Activated T-helper 2 cell treated with anti-CD3 and anti-CD28 coated beads, Interferon-gamma antibody, Interleukin-2, Interleukin-4, amounts not matched to agents 10 μg/mL and 5 μg/mL and 100 μg/mL, durations not matched to agents 14 hours and 24 hours and 36 hours (primary cell): ENCODE measurements at regions of chr2 and their contacts with region 1.

Region 1: GRCh38 chr2:108448678-108449493 is at the start of gene GCC2:
- DNase-seq: peak; percentile 94
- H3K4me3 Mint-ChIP-seq: peak within 1 kb of the TSS; percentile 93
- H3K27ac Mint-ChIP-seq: peak within 1 kb of the TSS; percentile 95
- H3K4me1 Mint-ChIP-seq: peaks cover 39% of the 10 kb centered on the region
- H3K27me3 Mint-ChIP-seq: no peaks in the 10 kb centered on the region
- total RNA-seq, gene GCC2: 38.8 and 42.7 TPM in 2 replicates

Region 2: DNA sequence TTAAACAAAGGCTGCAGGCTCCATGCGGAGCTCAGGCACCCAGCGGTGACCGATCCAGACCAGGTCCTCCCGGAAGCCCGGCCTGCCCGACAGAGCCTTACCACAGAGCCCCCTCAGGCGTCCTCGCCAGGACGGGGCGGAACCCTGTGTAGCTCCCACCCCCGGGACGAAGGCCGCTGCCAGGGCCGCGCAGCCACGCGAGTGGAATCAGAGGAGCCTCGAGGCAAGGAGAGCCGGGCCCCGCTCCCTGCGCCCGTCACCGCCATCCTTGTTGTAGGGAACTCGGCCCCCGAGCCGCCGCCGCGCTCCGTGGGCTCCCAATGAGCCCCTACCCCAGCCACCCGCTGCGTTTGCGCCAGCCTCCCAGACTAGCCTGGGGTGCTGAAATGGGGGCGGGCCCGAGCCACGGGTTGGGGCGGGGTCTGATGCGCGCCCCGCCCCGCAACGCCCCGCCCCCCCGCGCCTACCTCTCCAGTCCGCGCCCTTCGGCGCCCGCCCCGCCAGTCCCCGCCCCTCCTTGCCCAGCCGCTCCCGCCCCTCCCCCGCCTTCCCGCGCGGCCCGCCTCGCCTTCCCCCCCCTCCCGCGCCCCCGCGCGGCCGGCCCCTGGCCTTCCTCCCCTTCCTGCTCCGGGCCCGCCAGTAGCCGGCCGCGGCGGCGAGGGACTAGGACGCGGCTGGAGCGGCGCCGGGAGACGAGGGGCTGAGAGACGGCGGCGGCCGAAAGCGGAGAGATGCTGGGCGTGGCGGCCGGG is 85.1 kb after region 1 on chr2 and contains the start of gene LIMS1:
- intact Hi-C with region 1: loop called (anchors 1 kb)
- DNase-seq: peak; percentile 77
- H3K4me3 Mint-ChIP-seq: peak within 1 kb of the TSS; percentile 96
- H3K27ac Mint-ChIP-seq: peak within 1 kb of the TSS; percentile 97
- H3K4me1 Mint-ChIP-seq: peaks cover 52% of the 10 kb centered on the region
- H3K27me3 Mint-ChIP-seq: no peaks in the 10 kb centered on the region
- total RNA-seq, gene LIMS1: 48.4 and 49.1 TPM in 2 replicates

Region 3: GRCh38 chr2:108786354-108787199 is 337.7 kb after region 1 on chr2 and contains the start of gene CCDC138:
- intact Hi-C with region 1: loop called (anchors 2 kb)
- DNase-seq: peak; percentile 89
- H3K4me3 Mint-ChIP-seq: peak within 1 kb of the TSS; percentile 99
- H3K27ac Mint-ChIP-seq: peak within 1 kb of the TSS; percentile 99
- H3K4me1 Mint-ChIP-seq: peaks cover 16% of the 10 kb centered on the region
- H3K27me3 Mint-ChIP-seq: no peaks in the 10 kb centered on the region
- total RNA-seq, gene CCDC138: 13.6 and 14.1 TPM in 2 replicates